ENCODE measurements at regions of chr1 and their contacts with region 1.

Region 1: GRCh38 chr1:201114236-201115131 is 2.3 kb upstream of the CACNA1S start:
- DNase-seq: peak; percentile 46 to 78 (median 63)
- H3K4me3 ChIP-seq: peak overlapping the region; percentile 92
- H3K4me3 Mint-ChIP-seq: peak overlapping the region; percentile 84 to 97 (median 92)
- H3K27ac ChIP-seq: peak overlapping the region; percentile 47
- H3K27ac Mint-ChIP-seq: peak overlapping the region in 7 of 8 donors; percentile 72 to 94 (median 85)
- H3K4me1 ChIP-seq: peaks cover 9% of the 10 kb centered on the region
- H3K4me1 Mint-ChIP-seq: peaks cover 9 to 28% (median 25%) of the 10 kb centered on the region in 3 donors
- H3K27me3 ChIP-seq: no peaks in the 10 kb centered on the region
- H3K27me3 Mint-ChIP-seq: peaks cover 0 to 1% of the 10 kb centered on the region in 2 donors

Region 2: GRCh38 chr1:201085916-201086735 is 28.4 kb before region 1 on chr1:
- CTCF ChIA-PET with region 1: interaction called, 25 read pairs
- POLR2A ChIA-PET with region 1: no interaction called
- DNase-seq: peak in 2 of 5 donors; percentile 6 to 31
- H3K4me3 ChIP-seq: no peak overlapping the region
- H3K4me3 Mint-ChIP-seq: no peak overlapping the region
- H3K27ac ChIP-seq: no peak overlapping the region
- H3K27ac Mint-ChIP-seq: no peak overlapping the region
- H3K4me1 ChIP-seq: no peaks in the 10 kb centered on the region
- H3K4me1 Mint-ChIP-seq: no peaks in the 10 kb centered on the region
- H3K27me3 ChIP-seq: peaks cover 4% of the 10 kb centered on the region
- H3K27me3 Mint-ChIP-seq: peaks cover 8 to 32% of the 10 kb centered on the region in 2 donors

Region 3: DNA sequence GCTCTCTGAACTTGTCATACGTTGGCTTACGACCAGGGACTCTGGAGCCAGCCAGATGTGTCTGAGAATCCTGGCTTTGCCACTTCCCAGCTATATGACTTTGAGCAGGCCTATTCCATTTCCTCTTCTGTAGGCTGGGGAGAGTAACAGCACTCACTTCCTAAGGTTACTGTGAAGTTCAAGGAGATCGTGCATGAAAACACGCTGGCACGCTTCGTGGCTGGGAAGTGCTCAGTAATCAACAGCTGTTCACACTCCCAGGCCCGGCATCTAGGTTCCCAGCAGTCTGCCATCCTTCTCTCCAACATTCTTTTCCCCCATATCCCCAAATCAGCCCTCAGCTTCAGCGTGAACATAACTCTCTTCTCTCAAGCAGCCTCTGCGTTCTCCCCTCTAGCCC is 10.5 kb after region 1 on chr1:
- CTCF ChIA-PET with region 1: interaction called, 22 read pairs
- POLR2A ChIA-PET with region 1: no interaction called
- DNase-seq: no peak
- H3K4me3 ChIP-seq: no peak overlapping the region
- H3K4me3 Mint-ChIP-seq: no peak overlapping the region
- H3K27ac ChIP-seq: no peak overlapping the region
- H3K27ac Mint-ChIP-seq: no peak overlapping the region
- H3K4me1 ChIP-seq: no peaks in the 10 kb centered on the region
- H3K4me1 Mint-ChIP-seq: peaks cover under 1 to 4% (median 4%) of the 10 kb centered on the region in 3 donors
- H3K27me3 ChIP-seq: peaks cover 19% of the 10 kb centered on the region
- H3K27me3 Mint-ChIP-seq: peaks cover 8 to 47% of the 10 kb centered on the region in 2 donors